HEK293 (cell line): ENCODE measurements at regions of chr2 and their contacts with region 1.

Region 1: DNA sequence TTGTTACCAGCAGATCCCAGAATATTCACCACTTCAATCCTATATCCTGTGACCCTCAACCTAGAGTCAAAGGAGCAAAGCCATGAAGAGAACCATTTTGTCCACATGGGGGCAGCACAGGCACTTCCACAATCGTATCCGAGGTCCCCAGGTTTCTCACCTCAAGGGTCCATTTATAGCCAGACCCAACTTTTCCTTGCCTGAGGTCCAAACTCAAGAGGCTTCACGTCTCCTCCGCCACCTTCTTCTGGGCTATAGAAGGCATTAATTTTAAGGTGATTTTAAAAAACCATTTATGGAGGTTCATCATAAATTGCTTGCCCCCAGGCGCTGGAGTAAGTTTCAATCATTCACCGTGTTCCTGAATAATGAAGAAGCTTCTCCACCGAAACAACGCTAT is 111.6 kb upstream of the NABP1 start:
- H3K4me3 ChIP-seq: no peak overlapping the region
- H3K27ac ChIP-seq: no peak overlapping the region
- H3K4me1 ChIP-seq: no peaks in the 10 kb centered on the region; the same call in 1 of the 2 replicates
- CTCF ChIP-seq: peak; percentile 38; the same call in 1 of the 2 replicates

Region 2: GRCh38 chr2:191555092-191555742 is 11.1 kb before region 1 on chr2:
- CTCF ChIA-PET with region 1: interaction called, 16 read pairs
- POLR2A ChIA-PET with region 1: interaction called, 4 read pairs
- H3K4me3 ChIP-seq: no peak overlapping the region
- H3K27ac ChIP-seq: no peak overlapping the region
- H3K4me1 ChIP-seq: peaks cover 3% of the 10 kb centered on the region; the same call in 1 of the 2 replicates
- CTCF ChIP-seq: peak; percentile 81

Region 3: GRCh38 chr2:191582355-191582754 is 16.0 kb after region 1 on chr2:
- CTCF ChIA-PET with region 1: interaction called, 11 read pairs
- POLR2A ChIA-PET with region 1: no interaction called
- H3K4me3 ChIP-seq: no peak overlapping the region
- H3K27ac ChIP-seq: no peak overlapping the region
- H3K4me1 ChIP-seq: no peaks in the 10 kb centered on the region
- CTCF ChIP-seq: no peak

Region 4: DNA sequence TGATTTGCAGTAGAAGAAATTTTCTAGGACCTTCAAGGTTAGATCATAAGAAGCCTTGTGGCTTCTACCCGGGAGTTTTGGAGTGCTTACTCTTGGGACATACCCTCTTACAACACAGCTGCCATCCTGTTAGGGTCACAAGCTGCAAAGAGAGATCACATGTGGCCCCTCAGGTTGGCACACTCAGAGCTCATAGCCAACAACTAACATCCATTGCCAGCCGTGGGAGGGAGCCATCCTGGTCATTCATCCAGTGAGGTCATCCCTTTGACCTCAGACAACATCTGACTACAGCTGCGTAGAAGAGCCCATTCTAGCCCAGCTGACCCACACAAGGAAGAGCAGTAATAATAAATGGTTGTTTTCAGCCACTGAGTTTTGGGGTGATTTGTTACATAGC is 34.7 kb after region 1 on chr2:
- CTCF ChIA-PET with region 1: interaction called, 10 read pairs
- POLR2A ChIA-PET with region 1: no interaction called
- H3K4me3 ChIP-seq: no peak overlapping the region
- H3K27ac ChIP-seq: no peak overlapping the region
- H3K4me1 ChIP-seq: no peaks in the 10 kb centered on the region
- CTCF ChIP-seq: no peak

Region 5: DNA sequence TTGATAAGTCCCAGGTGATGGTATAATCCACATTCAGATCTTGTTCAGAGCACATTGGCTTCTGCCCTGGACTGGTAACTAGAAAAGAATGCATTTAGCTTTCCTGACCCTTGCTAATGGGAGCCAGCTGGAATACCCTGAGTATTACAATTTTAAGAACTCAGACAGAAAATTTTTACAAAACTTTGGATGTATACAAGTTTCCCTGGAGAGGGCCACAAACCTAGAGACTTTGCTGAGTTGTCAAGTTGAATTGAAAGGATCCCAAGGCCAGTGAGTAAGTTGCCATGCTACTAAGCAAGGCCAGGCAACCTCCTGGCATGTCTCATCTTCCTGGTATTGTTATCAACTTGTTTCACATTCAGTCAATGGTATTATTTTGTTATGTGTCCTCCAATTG is 91.6 kb after region 1 on chr2:
- CTCF ChIA-PET with region 1: no interaction called
- POLR2A ChIA-PET with region 1: no interaction called
- H3K4me3 ChIP-seq: no peak overlapping the region
- H3K27ac ChIP-seq: no peak overlapping the region
- H3K4me1 ChIP-seq: no peaks in the 10 kb centered on the region
- CTCF ChIP-seq: no peak

Region 6: DNA sequence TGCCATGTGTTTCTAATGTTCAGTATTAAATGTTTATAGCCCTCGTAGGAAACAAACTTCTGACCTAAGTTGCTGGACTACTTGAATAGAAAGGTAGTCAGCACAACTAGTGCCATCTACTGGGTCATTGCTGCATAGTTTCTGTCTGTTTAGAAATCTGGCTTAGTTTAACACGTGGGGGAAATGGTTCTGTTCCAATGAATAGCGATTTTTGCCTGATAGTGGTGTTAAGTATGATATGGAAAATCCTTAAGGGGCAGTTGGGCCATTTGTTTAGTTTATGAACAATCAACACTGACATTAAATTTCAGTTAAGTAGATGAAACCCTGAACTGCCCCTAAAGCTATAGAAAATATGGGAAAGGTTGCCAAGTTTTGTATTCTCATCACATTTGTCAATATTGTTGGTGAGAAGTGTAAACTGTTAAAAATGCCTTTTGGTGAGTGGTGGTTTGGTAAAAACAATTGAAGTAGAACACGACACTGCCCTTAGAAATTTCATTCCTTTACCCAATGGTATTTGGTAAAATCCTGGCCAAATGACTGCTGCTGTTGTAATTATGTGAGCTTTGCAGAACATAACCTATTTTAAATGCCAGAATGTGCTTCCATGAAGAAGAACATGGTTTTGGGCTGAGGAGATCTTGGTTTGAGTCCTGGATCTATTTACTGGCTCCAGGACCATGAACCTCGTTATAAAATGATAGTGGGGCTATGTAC is 124.8 kb after region 1 on chr2:
- CTCF ChIA-PET with region 1: interaction called, 19 read pairs
- POLR2A ChIA-PET with region 1: no interaction called
- H3K4me3 ChIP-seq: no peak overlapping the region
- H3K27ac ChIP-seq: no peak overlapping the region
- H3K4me1 ChIP-seq: peaks cover 7% of the 10 kb centered on the region
- CTCF ChIP-seq: peak; percentile 61

Region 7: DNA sequence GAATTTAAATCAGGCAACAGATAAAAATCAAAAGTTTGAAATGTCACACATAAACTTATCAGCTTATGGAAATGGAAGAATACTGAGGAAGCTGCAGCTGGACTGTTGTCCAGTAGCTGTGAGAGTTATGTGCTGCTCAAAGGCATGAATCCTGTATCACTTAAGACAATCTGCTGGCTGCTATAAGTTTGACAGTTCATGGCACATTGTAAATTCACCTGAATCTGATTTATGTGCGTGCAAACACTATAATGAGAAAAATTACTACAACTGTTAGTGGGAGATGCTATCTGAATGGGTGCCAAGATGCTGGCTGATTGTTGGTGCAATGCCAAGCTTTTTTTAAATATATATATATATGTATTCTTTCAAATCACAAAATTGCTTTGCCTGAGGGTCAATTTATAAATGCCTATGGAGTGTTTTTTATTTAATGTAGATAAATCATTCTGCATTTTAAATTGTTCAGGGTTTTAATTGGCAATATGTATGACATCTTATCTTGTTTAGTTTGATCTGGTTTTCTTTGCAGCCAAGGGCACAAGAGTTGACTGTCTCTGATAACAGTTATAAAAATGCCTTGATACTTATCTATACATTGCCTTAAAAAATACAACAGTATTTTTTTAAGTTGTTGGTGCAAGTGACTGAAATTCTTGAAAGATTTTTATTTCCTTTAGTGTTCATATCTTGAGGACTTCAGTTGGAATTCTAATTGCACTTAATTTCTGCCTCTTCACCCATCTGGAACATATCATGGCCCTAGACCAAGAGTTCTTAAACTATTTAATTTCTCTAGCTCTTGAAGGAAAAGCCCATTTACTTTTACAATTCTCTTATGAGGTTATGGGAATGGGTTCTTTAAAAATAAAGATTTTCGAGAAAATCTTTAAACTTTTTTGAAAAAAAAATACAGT is 231.9 kb after region 1 on chr2:
- CTCF ChIA-PET with region 1: interaction called, 11 read pairs
- POLR2A ChIA-PET with region 1: no interaction called
- H3K4me3 ChIP-seq: no peak overlapping the region
- H3K27ac ChIP-seq: no peak overlapping the region
- H3K4me1 ChIP-seq: no peaks in the 10 kb centered on the region
- CTCF ChIP-seq: no peak

Region 8: DNA sequence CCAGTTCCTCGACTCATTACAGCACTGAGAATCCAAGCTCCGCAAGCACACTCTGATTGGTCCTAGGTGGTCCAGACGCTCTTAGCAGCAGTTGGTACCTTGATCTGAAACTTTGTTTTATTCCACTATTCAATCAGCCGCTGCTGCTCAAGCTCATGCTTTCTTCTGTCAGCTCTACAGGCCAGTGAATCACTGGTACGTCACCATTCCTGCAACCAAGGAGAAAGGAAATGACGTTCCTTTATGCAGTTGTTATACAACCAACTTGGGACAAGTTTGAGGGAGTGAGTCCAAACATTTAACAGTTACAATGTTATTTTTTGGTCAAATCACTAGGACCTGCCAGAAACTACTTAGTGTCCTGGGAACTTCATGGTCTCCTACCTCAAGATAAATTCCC is 1027.2 kb after region 1 on chr2:
- CTCF ChIA-PET with region 1: no interaction called
- POLR2A ChIA-PET with region 1: no interaction called
- H3K4me3 ChIP-seq: no peak overlapping the region
- H3K27ac ChIP-seq: no peak overlapping the region
- H3K4me1 ChIP-seq: no peaks in the 10 kb centered on the region
- CTCF ChIP-seq: no peak